Heart left ventricle (tissue), 16 donors: ENCODE measurements at regions of chr19 and their contacts with region 1.

Region 1: DNA sequence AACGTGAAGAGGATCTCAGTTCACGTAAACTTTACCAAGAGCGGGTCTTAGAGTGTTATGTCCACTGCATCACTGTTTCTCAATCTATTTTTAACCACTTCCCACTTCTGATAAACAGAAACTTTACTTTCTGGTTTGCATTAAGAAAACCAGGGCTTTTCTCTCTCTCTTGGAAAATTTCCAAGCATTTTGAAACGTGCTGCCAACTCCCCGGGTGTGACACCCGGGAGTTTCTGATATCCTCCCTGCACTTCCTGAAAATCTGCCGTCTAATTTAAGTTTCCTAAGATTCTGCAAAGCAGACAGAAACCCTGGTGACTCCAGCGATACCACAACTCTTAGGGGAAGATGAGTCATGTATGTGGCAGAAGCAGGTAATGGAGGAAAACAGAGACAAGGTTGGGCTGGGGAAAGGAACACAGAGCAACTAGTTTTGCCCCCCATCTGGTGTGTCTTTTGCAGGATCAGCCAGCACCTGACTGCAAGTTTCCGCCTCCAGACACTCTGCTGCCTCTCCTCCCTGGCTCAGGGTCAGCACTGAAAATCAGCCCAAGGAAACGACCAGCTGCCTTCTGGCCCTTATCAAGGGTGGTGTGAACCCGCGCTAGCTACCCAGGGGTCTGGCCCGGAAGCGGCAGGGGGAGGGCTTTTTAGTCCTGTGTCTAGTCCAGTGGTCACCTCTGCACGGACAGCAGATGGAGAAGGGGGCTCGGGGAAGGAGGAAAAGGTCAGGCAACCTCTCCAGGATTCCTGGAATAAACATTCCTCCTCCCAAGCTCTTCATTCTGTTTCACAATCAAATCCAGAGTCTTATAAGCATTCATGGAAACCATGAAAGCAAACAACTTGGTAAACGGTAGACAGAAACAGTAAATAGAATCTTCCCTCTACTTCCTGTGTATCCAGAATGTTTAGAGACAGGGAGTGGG is 11.3 kb upstream of the FFAR2 start:
- DNase-seq: no peak
- ATAC-seq: peak in 3 of 4 donors; percentile 46 to 55 (median 52)
- H3K4me3 ChIP-seq: peak overlapping the region in 2 of 12 donors; percentile 12 to 25
- H3K27ac ChIP-seq: peak overlapping the region in 8 of 12 donors; percentile 9 to 81 (median 30)
- H3K4me1 ChIP-seq: peaks cover 6 to 75% (median 31%) of the 10 kb centered on the region in 12 donors
- H3K27me3 ChIP-seq: no peaks in the 10 kb centered on the region
- CTCF ChIP-seq: no peak
- POLR2A ChIP-seq: no peak

Region 2: DNA sequence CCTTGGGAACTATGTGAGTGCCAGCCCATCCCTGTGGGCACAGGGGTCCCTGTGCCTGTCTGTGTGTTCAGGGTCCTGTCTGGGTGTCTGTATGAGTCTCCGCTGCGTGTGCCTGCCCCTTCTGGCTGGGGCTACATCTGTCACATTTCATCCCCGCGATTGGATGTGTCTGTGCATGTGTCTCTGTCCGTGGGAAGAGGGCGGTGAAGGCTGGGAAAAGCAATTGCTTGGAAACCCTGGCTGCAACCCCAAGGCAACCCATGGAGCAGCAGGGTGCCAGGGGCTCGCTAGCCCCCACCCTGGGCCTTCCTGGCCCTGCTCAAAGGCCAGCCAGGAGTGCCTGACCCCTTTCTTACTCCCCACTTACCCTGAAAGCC is 143.4 kb before region 1 on chr19:
- intact Hi-C with region 1: no loop called
- DNase-seq: no peak
- ATAC-seq: no peak
- H3K4me3 ChIP-seq: no peak overlapping the region
- H3K27ac ChIP-seq: no peak overlapping the region
- H3K4me1 ChIP-seq: no peaks in the 10 kb centered on the region
- H3K27me3 ChIP-seq: peaks cover 0 to 32% (median 6%) of the 10 kb centered on the region in 9 donors
- CTCF ChIP-seq: no peak
- POLR2A ChIP-seq: no peak

Region 3: DNA sequence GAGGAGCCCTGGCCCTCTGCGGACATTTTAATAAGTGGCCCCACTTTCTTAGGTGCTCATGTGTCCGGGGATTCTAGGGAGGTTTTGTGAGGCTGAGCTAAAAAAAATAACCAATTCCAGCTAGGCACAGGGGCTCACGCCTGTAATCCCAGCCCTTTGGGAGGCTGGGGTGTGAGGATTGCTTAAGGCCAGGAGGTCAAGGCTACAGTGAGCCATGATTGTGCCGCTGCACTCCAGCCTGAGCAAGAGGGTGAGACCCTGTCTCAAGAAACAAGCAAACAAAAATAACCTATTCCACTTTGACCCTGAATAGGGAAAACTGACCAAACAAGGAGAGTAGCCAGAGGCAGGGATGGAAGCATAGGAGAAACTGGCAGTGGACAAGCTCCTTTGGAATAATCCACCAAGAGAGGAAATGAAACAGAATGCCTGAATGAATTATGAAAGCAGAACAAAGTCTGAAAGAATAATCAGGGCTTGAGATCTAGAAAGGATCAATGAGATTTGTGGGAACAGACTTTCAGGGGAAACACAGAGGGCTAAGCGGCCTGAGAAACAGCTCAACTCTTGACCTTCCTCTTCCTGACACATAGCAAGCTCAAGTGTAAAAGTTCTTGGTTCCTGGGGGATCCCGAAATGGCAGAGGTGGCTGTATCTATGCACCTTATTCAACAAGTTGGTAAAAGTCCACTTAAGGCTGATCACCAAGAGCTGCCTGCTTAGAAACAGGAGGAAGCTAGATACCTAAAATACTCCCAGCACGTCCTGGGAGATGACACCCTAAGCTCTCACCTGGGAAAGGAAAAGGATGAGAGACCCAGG is 18.8 kb before region 1 on chr19:
- intact Hi-C with region 1: no loop called
- DNase-seq: no peak
- ATAC-seq: no peak
- H3K4me3 ChIP-seq: no peak overlapping the region
- H3K27ac ChIP-seq: no peak overlapping the region
- H3K4me1 ChIP-seq: peaks cover 0 to 16% (median 0%) of the 10 kb centered on the region in 12 donors
- H3K27me3 ChIP-seq: peaks cover 0 to 3% (median 0%) of the 10 kb centered on the region in 9 donors
- CTCF ChIP-seq: no peak
- POLR2A ChIP-seq: no peak

Region 4: DNA sequence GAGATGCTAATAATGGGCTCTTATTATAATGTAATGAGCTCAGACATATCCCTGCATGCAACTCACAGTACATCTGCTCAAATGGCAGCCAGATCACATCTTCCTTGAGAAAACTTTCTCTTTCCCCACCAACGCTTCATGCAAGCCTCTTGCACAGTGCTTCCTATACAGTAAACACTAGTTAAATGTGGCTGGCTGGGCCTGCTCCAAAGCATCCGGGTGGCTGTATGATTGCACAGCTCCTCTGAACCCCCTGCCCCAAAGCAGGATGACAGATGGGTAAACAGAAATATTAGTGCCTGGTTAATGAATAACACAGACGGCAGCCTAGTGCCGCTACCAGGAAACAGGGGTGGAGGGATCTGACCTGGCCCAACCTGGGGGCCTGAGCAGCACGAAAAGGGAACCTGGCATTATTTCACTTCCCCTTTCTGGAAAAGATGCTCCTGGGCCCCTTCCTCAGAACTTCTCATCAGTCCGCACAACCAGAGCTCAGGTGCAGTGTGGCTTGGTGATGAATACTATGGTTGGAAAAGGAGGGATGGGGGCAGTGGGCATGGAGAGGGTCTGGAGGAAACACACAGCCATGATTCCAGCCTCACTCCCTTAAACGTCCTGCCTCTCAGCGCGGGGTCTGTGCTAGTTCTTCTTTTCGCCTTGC is 22.1 kb after region 1 on chr19:
- intact Hi-C with region 1: loop called in 1 of 10 experiments (anchors 2 kb)
- DNase-seq: no peak
- ATAC-seq: peak in 2 of 4 donors; percentile 29 to 38
- H3K4me3 ChIP-seq: no peak overlapping the region
- H3K27ac ChIP-seq: peak overlapping the region in 5 of 12 donors; percentile 11 to 68 (median 24)
- H3K4me1 ChIP-seq: peaks cover 3 to 64% (median 23%) of the 10 kb centered on the region in 12 donors
- H3K27me3 ChIP-seq: no peaks in the 10 kb centered on the region
- CTCF ChIP-seq: no peak
- POLR2A ChIP-seq: no peak